ENCODE measurements at regions of chr10 and their contacts with region 1.

Region 1: DNA sequence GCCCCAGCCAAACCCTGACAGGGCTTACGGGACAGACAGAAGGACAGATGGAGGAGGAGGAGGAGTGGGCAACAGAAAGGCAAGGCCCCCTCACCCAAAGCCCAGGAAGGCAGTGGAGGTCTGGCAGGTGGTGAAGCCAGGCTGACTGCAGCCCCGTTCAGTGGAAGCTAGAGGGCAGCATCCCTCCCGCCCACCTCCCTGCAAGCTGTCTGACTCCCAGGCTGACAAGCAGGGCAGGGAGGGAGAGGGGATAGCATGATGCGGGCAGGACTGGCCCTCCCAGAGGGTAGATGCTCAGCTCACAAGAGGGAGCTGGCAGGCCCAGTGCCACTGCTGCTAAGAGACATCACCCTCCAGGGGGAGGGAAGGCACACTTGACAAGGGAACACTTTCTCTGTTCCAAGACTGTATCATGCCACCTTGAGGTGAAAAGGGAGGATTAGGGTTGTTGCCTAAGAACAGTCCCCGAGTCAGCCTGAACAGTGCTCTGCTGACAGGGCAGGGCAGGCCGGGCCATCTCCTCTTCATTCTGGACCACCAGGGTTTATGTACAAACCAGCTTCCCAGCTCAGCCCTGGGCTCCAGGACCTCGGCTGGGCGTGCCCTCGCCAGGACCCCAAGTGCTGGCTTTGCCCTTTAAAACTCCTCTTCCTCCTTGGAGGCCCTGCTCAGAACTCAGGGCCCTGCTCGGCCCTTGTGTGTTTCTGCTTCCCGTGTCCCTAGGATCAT is 61.8 kb downstream of the RASGEF1A start:
- DNase-seq: peak; percentile 73
- H3K4me3 Mint-ChIP-seq: no peak overlapping the region
- H3K27ac Mint-ChIP-seq: no peak overlapping the region
- H3K4me1 Mint-ChIP-seq: peaks cover 4% of the 10 kb centered on the region
- H3K27me3 Mint-ChIP-seq: no peaks in the 10 kb centered on the region

Region 2: GRCh38 chr10:42836768-42837468 is 368.2 kb before region 1 on chr10:
- CTCF ChIA-PET with region 1: no interaction called
- intact Hi-C with region 1: no loop called
- DNase-seq: no peak
- H3K4me3 Mint-ChIP-seq: peak overlapping the region; percentile 24
- H3K27ac Mint-ChIP-seq: no peak overlapping the region
- H3K4me1 Mint-ChIP-seq: peaks cover 2% of the 10 kb centered on the region
- H3K27me3 Mint-ChIP-seq: peaks cover 34% of the 10 kb centered on the region

Region 3: GRCh38 chr10:42933448-42934340 is 271.4 kb before region 1 on chr10:
- CTCF ChIA-PET with region 1: no interaction called
- intact Hi-C with region 1: loop called (anchors 10 kb)
- DNase-seq: peak; percentile 56
- H3K4me3 Mint-ChIP-seq: peak overlapping the region; percentile 71
- H3K27ac Mint-ChIP-seq: no peak overlapping the region
- H3K4me1 Mint-ChIP-seq: peaks cover 13% of the 10 kb centered on the region
- H3K27me3 Mint-ChIP-seq: peaks cover 4% of the 10 kb centered on the region

Region 4: GRCh38 chr10:43120929-43121314 is 84.2 kb before region 1 on chr10:
- CTCF ChIA-PET with region 1: interaction called, 3 read pairs
- intact Hi-C with region 1: loop called (anchors 2 kb)
- DNase-seq: peak; percentile 91
- H3K4me3 Mint-ChIP-seq: no peak overlapping the region
- H3K27ac Mint-ChIP-seq: peak overlapping the region; percentile 77
- H3K4me1 Mint-ChIP-seq: peaks cover 16% of the 10 kb centered on the region
- H3K27me3 Mint-ChIP-seq: no peaks in the 10 kb centered on the region

Region 5: GRCh38 chr10:43255634-43256431 is 50.7 kb after region 1 on chr10:
- CTCF ChIA-PET with region 1: interaction called, 8 read pairs
- intact Hi-C with region 1: loop called (anchors 5 kb)
- DNase-seq: peak; percentile 51
- H3K4me3 Mint-ChIP-seq: no peak overlapping the region
- H3K27ac Mint-ChIP-seq: no peak overlapping the region
- H3K4me1 Mint-ChIP-seq: no peaks in the 10 kb centered on the region
- H3K27me3 Mint-ChIP-seq: peaks cover 1% of the 10 kb centered on the region

Region 6: GRCh38 chr10:43461950-43462349 is 256.8 kb after region 1 on chr10:
- CTCF ChIA-PET with region 1: interaction called, 7 read pairs
- intact Hi-C with region 1: loop called (anchors 1 kb)
- DNase-seq: peak; percentile 24
- H3K4me3 Mint-ChIP-seq: no peak overlapping the region
- H3K27ac Mint-ChIP-seq: no peak overlapping the region
- H3K4me1 Mint-ChIP-seq: peaks cover 12% of the 10 kb centered on the region
- H3K27me3 Mint-ChIP-seq: no peaks in the 10 kb centered on the region

Measured in activated naive CD4-positive, alpha-beta T cell treated with anti-CD3 and anti-CD28 coated beads for 36 hours (primary cell).